ENCODE measurements at regions of chr5 and their contacts with region 1.

Region 1: GRCh38 chr5:60649283-60649917 is 50.6 kb downstream of the DEPDC1B start:
- DNase-seq: no peak
- H3K4me3 ChIP-seq: no peak overlapping the region
- H3K27ac ChIP-seq: no peak overlapping the region
- H3K4me1 ChIP-seq: no peaks in the 10 kb centered on the region
- H3K27me3 ChIP-seq: no peaks in the 10 kb centered on the region
- CTCF ChIP-seq: peak; percentile 54

Region 2: DNA sequence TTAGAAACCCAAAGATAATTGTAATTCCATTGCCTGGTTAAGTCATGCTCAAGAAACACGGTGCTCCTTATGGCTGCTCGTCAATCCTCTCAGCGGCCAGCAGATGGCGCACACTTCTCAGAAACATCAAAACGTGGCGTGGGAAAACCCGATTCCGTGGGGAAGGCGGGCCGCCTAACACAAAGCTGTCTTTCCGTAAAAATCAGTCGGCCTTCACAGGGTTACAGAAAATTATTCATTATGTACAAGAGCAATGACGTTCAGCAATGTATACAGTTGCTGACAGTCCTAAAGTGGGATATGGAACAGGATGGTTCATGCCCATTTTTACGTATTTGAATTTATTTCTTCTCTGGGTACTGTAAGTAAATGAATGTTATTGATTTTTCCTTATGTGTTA is 839.4 kb before region 1 on chr5:
- intact Hi-C with region 1: loop called (anchors 5 kb)
- DNase-seq: peak; percentile 68
- H3K4me3 ChIP-seq: peak overlapping the region; percentile 31
- H3K27ac ChIP-seq: no peak overlapping the region
- H3K4me1 ChIP-seq: peaks cover 6% of the 10 kb centered on the region
- H3K27me3 ChIP-seq: peaks cover 24% of the 10 kb centered on the region
- CTCF ChIP-seq: peak; percentile 95

Region 3: DNA sequence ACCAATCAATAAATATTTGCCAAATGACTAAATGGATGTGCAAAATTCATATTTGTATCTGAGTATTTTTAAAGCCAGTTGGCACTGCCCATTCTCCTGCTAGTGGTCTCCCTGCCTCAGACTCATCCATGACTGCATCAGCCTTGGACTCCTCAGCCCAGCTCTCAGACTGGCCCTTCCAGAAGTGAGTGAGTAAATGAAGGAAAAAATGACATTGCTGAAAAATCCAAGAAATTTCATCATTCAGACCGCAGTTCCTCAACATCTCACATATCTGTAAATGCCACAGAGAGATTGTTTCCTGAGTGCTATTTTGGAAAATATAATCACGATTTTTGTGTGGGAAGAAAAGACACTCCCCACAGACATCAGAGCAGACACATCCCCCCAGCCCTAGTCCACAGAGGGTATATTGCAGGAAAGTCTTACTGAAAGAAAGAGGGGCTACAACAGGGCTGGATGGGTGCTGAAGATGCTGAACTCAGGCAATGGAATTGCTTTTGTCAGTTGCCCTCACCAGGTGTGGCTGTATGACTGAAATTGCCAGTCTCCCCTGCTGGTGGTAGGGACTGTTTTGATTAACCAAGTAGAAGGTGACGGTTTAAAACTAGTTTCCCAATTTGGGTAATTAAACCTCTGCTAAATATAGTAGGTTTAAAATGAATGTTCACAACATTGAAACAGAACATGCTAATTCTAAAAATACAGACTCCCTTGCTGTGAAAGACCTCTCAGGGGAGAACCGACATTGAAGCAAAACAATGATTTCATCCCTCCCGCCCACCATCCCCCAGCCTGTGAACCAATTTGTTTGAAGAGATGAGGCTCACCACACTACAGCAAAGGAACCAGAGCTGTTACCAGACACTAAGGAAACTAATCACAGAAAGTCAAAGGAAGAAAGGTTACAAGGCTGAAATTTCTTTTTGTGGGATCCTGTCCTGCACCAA is 108.3 kb before region 1 on chr5:
- intact Hi-C with region 1: no loop called
- DNase-seq: no peak
- H3K4me3 ChIP-seq: no peak overlapping the region
- H3K27ac ChIP-seq: peak overlapping the region; percentile 57
- H3K4me1 ChIP-seq: peaks cover 33% of the 10 kb centered on the region
- H3K27me3 ChIP-seq: no peaks in the 10 kb centered on the region
- CTCF ChIP-seq: no peak

Measured in left ventricle myocardium inferior (tissue), 1 donor.